ENCODE measurements at regions of chr19 and their contacts with region 1.

Region 1: DNA sequence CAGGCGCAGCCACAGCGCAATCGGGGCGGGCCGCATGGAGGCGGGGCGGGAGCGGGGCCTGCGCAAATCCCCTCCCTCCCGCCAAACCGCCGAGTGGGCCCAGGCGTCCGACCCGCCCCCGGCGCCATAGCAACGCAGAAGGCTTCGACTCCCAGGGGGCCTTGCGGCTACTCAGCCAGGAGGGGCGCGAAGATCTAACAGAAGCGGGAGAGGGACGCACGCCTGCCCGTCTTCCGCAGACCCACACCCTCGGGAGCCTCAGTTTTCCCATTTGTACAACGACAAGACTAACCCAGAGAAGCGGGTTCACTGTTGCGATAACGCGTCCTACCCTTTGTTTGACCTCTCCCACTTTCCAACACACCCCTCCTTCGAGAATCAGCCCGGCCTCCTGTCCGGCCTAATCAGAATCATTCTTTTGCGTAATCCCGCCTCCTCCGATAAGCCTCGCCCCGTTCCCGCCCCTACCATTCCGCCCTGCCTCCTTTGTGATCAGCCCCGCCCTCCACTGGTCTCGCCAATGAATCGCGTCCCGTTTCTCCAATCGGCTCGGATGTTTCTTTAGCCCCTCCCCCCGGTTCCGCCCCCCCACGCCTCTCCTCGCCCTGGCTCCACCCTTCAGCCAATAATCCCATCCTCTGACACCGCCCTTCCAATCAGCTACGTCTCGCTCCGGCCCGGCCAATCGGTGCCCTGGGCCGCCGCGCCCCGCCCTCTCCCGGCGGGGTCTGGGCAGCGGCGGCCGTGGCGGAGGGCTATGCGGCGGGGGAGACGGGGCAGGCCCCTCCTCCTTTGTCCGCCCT is at the start of gene PCSK4:
- DNase-seq: peak; percentile 85 to 95
- H3K4me3 ChIP-seq: peak within 1 kb of the TSS; percentile 66
- H3K27ac ChIP-seq: no peak within 1 kb of the TSS
- H3K4me1 ChIP-seq: peaks cover 13% of the 10 kb centered on the region
- H3K27me3 ChIP-seq: no peaks in the 10 kb centered on the region
- CTCF ChIP-seq: no peak; the same call in 1 of the 2 replicates
- total RNA-seq, gene PCSK4: 18.6 and 27.3 TPM in 2 replicates

Region 2: DNA sequence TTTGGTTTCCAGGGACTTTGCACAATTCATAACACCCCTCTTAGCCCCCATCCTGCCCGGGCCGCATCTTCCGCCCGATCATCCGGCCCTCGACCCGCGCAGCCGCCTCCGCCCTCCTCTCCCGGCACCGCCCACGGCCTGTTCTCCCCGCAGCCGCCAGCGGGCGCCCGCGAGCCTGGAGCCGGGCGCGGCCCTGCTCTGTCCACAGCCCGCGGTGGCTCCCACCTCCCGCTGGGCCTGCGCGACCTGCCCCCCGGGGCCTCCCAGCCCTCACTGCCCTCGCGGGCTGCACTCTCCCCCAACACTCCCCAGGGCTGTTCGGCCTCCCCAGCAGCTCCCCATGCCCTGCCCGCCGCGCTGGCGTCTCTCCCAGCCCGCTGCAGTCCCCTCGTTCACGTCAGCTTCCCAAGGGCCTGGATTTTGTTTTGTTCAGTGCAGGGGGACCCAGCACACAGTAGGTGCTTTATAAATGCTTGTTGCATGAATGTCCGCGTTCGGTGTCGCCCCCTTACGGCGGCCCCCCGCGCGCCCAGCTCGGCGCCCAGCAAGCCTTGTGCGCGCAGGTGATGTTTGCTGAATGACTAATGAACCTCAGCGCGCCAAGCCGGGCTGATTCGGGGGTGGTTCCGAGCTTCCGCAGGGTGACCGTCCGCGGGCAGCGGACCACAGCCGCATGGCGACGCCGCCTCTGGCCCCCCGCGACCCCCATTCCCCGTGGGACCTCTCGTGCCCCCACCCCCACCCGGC is 45.2 kb before region 1 on chr19:
- CTCF ChIA-PET with region 1: no interaction called
- POLR2A ChIA-PET with region 1: no interaction called
- intact Hi-C with region 1: loop called (anchors 2 kb)
- DNase-seq: peak; percentile 40 to 64
- H3K4me3 ChIP-seq: peak overlapping the region; percentile 51; the same call in 1 of the 2 replicates
- H3K27ac ChIP-seq: no peak overlapping the region
- H3K4me1 ChIP-seq: peaks cover 16% of the 10 kb centered on the region
- H3K27me3 ChIP-seq: no peaks in the 10 kb centered on the region
- CTCF ChIP-seq: peak; percentile 73

Region 3: GRCh38 chr19:1474765-1475351 is 15.7 kb before region 1 on chr19:
- CTCF ChIA-PET with region 1: no interaction called
- POLR2A ChIA-PET with region 1: interaction called, 13 read pairs
- intact Hi-C with region 1: no loop called
- DNase-seq: no peak
- H3K4me3 ChIP-seq: no peak overlapping the region
- H3K27ac ChIP-seq: no peak overlapping the region
- H3K4me1 ChIP-seq: 0 out of 2 replicates have a peak, but pooled peaks cover 9% of the 10 kb centered on the region
- H3K27me3 ChIP-seq: no peaks in the 10 kb centered on the region
- CTCF ChIP-seq: no peak

Region 4: DNA sequence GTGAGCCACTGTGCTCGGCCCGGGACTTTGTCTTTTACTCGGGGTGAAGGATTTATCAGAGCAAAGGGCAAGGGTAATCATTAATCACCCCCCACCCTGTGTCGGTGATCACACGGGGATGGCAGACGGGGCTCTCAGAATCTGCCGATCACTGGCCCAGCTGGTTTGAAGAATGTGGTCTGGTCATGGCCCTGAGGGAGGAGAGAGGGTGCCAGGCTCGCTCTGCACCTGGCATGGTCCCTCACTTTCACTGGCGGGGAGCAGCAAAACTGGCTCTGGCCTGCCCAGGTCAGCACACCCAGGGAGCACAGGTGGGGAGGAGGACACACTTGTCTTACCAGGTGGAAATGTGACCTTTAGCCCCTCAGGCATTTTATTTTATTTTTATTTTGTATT is 10.7 kb after region 1 on chr19:
- CTCF ChIA-PET with region 1: no interaction called
- POLR2A ChIA-PET with region 1: interaction called, 13 read pairs
- intact Hi-C with region 1: no loop called
- DNase-seq: peak; percentile 35 to 65
- H3K4me3 ChIP-seq: no peak overlapping the region
- H3K27ac ChIP-seq: no peak overlapping the region
- H3K4me1 ChIP-seq: no peaks in the 10 kb centered on the region
- H3K27me3 ChIP-seq: no peaks in the 10 kb centered on the region
- CTCF ChIP-seq: no peak

Region 5: GRCh38 chr19:1587873-1588272 is 97.4 kb after region 1 on chr19:
- CTCF ChIA-PET with region 1: no interaction called
- POLR2A ChIA-PET with region 1: interaction called, 21 read pairs
- intact Hi-C with region 1: no loop called
- DNase-seq: no peak
- H3K4me3 ChIP-seq: no peak overlapping the region
- H3K27ac ChIP-seq: 0 out of 2 replicates have a peak overlapping the region, but pooled peaks have one; percentile 29
- H3K4me1 ChIP-seq: peaks cover 7% of the 10 kb centered on the region
- H3K27me3 ChIP-seq: no peaks in the 10 kb centered on the region
- CTCF ChIP-seq: no peak

Region 6: DNA sequence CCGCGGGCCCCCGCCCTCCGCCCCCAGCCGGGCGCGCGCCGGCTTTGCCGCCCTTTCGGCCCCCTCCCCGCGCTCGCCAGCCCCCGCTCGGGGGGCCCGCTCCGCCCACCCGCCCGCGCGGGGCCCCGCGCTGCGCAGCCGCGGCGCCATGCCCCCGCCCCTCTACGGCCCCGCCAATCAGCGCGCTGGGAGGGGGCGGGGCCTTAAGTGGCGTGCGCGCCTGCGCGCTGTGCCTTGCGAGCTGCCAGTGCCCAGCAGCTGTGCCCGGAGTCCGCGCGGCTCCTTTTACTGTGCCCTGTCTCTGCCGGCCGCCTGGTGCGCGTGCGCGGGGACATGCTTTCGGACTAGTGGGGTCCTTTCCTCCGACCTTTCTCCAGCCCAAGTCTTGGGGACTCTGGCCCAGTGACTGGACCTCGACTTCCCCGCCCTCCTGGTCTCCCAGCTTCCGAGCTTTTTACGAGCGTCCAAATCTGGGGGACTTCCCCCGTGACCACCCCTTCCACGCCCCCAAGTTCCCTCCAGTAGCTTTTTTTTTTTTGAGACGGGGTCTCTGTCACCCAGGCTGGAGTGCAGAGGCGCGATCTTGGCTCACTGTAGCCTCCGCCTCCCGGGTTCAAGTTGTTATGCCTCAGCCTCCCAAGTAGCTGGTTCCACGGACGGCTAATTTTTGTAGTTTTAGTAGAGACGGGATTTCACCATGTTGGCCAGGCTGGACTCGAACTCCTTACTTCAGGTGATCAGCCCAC is 102.4 kb after region 1 on chr19 and contains the start of gene MBD3:
- CTCF ChIA-PET with region 1: no interaction called
- POLR2A ChIA-PET with region 1: interaction called, 21 read pairs
- intact Hi-C with region 1: no loop called
- DNase-seq: peak; percentile 71 to 93
- H3K4me3 ChIP-seq: peak within 1 kb of the TSS; percentile 78
- H3K27ac ChIP-seq: peak within 1 kb of the TSS; percentile 88
- H3K4me1 ChIP-seq: peaks cover 7% of the 10 kb centered on the region; the same call in 1 of the 2 replicates
- H3K27me3 ChIP-seq: no peaks in the 10 kb centered on the region
- CTCF ChIP-seq: no peak
- total RNA-seq, gene MBD3: 129 and 143 TPM in 2 replicates

Region 7: GRCh38 chr19:1905071-1905862 is 414.8 kb after region 1 on chr19 and contains the starts of genes ADAT3 and SCAMP4:
- CTCF ChIA-PET with region 1: no interaction called
- POLR2A ChIA-PET with region 1: interaction called, 16 read pairs
- intact Hi-C with region 1: no loop called
- DNase-seq: peak; percentile 92 to 96
- H3K4me3 ChIP-seq: peak within 1 kb of the TSS; percentile 59
- H3K27ac ChIP-seq: peak within 1 kb of the TSS; percentile 96
- H3K4me1 ChIP-seq: peaks cover 19% of the 10 kb centered on the region
- H3K27me3 ChIP-seq: no peaks in the 10 kb centered on the region
- CTCF ChIP-seq: no peak
- total RNA-seq, gene ADAT3: 7.8 and 10.1 TPM in 2 replicates
- total RNA-seq, gene SCAMP4: 61.7 and 69.8 TPM in 2 replicates

Measured in PC-9 (cell line).